ENCODE measurements at regions of chr2 and their contacts with region 1.

Region 1: GRCh38 chr2:216687646-216688045 is 7.7 kb downstream of the IGFBP5 start:
- DNase-seq: no peak
- ATAC-seq: no peak
- H3K4me3 ChIP-seq: no peak overlapping the region
- H3K27ac ChIP-seq: no peak overlapping the region
- H3K4me1 ChIP-seq: peaks cover 14% of the 10 kb centered on the region
- H3K27me3 ChIP-seq: no peaks in the 10 kb centered on the region

Region 2: GRCh38 chr2:217166241-217166850 is 478.7 kb after region 1 on chr2:
- intact Hi-C with region 1: loop called in 2 of 4 experiments (anchors 5 to 10 kb)
- DNase-seq: no peak
- ATAC-seq: peak; percentile 72 to 79
- H3K4me3 ChIP-seq: no peak overlapping the region
- H3K27ac ChIP-seq: no peak overlapping the region
- H3K4me1 ChIP-seq: peaks cover 1% of the 10 kb centered on the region
- H3K27me3 ChIP-seq: no peaks in the 10 kb centered on the region